Posterior vena cava (tissue), 2 donors: ENCODE measurements at regions of chr1 and their contacts with region 1.

Region 1: DNA sequence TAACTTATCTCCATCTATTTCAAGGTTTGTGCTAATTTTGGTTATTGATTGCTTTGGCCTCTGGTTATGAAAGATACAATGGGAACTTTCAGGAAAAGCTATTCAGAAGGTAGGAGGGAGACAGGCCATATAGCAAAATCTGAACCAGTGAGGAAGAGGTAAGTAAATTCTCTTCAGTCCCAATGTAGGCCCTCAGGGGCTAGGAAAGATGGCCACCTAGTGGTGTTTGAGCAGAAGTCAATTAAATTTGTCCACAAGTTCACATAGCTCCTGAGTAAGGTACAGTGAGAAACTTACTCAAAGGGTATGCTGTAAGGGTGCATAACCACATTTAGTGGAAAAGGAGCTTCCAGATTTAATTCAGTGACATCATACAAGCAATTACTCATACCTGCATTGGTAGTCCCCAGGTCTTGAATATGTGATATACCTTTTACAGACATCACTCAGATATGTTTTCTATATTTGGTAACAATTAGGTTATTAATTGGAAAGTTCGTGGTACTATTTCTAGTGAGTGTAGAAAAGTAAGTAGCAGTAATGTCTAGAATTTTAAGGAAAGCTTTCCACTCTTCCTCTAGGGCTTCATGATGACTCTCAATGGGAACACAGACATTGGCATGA is 21.4 kb upstream of the FMO1 start:
- DNase-seq: no peak

Region 2: DNA sequence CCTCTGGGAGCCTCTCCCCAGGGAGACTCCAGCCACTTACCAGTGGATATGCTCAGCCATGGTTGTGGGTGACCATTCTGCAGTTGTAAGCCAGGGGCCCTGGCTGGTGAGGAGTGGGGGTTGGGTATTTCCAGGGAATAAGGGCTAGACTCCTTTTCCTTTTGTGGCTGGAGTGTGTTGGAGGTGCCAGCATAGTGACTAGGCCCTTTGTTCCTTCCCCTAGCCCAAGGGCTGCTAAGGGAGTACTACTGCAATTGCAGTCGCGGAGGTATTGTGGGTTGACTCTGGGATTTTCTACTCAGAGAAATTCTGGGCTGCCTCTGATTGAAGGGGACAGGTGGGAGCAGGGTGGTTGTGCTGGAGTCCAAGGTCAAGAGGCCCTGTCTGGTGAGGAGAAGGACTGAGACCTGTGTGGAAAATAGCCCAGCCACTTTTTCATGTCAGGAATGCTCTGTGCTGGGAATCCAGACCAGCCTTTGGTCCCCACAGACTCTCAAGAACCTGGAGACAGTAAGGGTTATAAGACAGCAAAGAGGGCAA is 248.4 kb before region 1 on chr1:
- intact Hi-C with region 1: loop called in 1 of 2 experiments (anchors 10 kb)
- DNase-seq: no peak

Region 3: DNA sequence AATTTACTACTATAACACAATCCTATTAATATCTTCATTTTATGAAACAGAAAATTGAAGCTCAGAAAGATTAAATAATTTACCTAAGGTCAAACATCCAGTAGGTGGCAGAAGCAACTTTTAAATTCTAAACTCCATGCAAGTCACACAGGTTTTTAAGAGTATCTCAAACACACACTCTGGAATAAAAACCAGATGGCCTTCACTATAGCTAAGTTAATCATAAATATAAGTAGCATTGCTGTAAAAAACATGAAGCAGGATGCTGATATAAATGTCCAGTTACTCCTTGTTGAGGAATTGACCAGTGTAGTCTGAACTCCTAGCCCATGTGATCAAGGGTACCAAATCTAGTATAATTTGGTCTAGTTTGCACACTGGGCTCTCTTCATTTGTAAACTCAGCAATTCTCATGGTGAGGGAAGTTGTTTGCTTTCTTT is 145.5 kb before region 1 on chr1:
- intact Hi-C with region 1: loop called (anchors 5 to 10 kb)
- DNase-seq: no peak

Region 4: DNA sequence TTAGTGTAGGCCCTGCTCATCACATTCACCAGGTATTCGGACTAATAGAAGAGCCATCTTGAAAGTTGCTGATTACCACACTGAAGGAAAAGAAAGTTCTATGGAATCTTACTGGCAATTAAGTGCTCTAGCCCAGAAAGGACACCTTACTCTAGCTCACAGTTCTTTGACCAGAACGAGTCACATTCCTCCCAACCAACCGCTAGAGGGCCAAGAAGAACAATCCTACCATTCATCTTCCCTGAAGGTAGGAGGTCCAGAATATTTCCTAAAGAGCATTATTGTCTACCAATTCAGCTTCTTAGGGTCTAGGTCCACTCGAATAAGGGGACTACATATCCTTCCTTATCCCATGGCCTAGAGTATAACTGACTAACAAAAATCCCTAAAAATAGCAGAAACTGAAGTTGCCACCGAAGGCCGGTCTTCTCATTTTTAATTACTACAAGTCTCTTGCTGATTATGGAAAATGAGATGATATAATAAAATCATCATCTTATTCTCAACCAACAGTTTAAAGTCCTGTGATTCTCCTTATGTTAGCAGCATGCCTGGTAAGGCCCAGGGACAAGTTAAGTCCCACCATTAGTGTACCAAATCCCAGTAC is 18.7 kb after region 1 on chr1:
- intact Hi-C with region 1: no loop called
- DNase-seq: no peak